Heart right ventricle (tissue), 16 donors: ENCODE measurements at regions of chr11 and their contacts with region 1.

Region 1: DNA sequence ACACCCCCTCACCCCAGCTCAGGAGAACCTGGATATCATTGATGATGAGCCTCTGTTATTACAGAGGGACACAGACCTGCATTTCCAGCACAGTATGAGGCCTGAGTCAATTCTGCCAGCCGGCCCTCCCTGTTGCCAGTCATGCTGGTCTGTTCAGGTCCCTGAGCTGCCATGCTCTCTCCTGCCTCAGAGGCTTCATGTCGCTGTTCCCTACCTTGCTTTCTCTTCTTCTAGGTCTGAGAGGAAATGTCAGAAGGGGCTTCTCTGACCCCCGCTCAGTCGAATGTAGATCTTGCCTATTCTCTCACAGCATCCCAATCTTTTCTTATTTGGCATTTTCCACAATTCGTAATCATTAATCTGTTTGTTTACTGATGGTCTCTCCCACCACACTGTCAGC is 21.8 kb upstream of the ABCC8 start:
- DNase-seq: no peak
- ATAC-seq: no peak
- H3K4me3 ChIP-seq: no peak overlapping the region
- H3K27ac ChIP-seq: no peak overlapping the region
- H3K4me1 ChIP-seq: peaks cover 0 to 5% (median 0%) of the 10 kb centered on the region in 9 donors
- H3K27me3 ChIP-seq: peaks cover 0 to 16% (median 0%) of the 10 kb centered on the region in 7 donors
- CTCF ChIP-seq: no peak

Region 2: GRCh38 chr11:17256512-17256911 is 242.0 kb before region 1 on chr11:
- intact Hi-C with region 1: no loop called
- DNase-seq: no peak
- ATAC-seq: no peak
- H3K4me3 ChIP-seq: no peak overlapping the region
- H3K27ac ChIP-seq: peak overlapping the region in 1 of 10 donors; percentile 40
- H3K4me1 ChIP-seq: no peaks in the 10 kb centered on the region
- H3K27me3 ChIP-seq: no peaks in the 10 kb centered on the region
- CTCF ChIP-seq: no peak

Region 3: DNA sequence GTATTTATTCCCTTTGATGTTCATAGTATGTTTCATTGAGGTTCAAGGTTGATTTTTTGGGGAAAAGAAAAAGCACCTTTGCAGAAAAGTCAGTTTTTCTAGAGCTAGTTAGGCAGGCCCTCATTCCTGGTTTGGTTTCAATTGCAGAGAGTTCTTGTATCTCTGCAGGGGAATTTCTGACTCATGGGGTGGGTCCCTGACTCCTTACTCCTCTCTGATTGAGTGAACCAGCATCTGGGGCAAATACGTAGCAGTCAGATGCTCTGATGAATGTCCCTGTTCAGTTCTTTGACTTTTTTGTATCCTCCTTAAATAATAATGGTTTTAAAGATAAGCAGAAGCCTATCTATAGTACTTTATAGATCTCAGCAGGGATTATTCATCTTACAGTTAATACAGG is 154.6 kb before region 1 on chr11:
- intact Hi-C with region 1: no loop called
- DNase-seq: no peak
- ATAC-seq: no peak
- H3K4me3 ChIP-seq: no peak overlapping the region
- H3K27ac ChIP-seq: no peak overlapping the region
- H3K4me1 ChIP-seq: no peaks in the 10 kb centered on the region
- H3K27me3 ChIP-seq: no peaks in the 10 kb centered on the region
- CTCF ChIP-seq: no peak

Region 4: GRCh38 chr11:17403982-17404759 is 94.3 kb before region 1 on chr11:
- intact Hi-C with region 1: loop called in 1 of 10 experiments (anchors 5 kb)
- DNase-seq: no peak
- ATAC-seq: no peak
- H3K4me3 ChIP-seq: no peak overlapping the region
- H3K27ac ChIP-seq: no peak overlapping the region
- H3K4me1 ChIP-seq: peaks cover 5 to 24% (median 19%) of the 10 kb centered on the region in 9 donors
- H3K27me3 ChIP-seq: no peaks in the 10 kb centered on the region
- CTCF ChIP-seq: no peak

Region 5: GRCh38 chr11:17449158-17449557 is 49.3 kb before region 1 on chr11:
- intact Hi-C with region 1: loop called in 1 of 10 experiments (anchors 1 kb)
- DNase-seq: no peak
- ATAC-seq: no peak
- H3K4me3 ChIP-seq: no peak overlapping the region
- H3K27ac ChIP-seq: no peak overlapping the region
- H3K4me1 ChIP-seq: no peaks in the 10 kb centered on the region
- H3K27me3 ChIP-seq: peaks cover 0 to 6% (median 0%) of the 10 kb centered on the region in 7 donors
- CTCF ChIP-seq: no peak